ENCODE measurements at regions of chr14 and their contacts with region 1.

Region 1: DNA sequence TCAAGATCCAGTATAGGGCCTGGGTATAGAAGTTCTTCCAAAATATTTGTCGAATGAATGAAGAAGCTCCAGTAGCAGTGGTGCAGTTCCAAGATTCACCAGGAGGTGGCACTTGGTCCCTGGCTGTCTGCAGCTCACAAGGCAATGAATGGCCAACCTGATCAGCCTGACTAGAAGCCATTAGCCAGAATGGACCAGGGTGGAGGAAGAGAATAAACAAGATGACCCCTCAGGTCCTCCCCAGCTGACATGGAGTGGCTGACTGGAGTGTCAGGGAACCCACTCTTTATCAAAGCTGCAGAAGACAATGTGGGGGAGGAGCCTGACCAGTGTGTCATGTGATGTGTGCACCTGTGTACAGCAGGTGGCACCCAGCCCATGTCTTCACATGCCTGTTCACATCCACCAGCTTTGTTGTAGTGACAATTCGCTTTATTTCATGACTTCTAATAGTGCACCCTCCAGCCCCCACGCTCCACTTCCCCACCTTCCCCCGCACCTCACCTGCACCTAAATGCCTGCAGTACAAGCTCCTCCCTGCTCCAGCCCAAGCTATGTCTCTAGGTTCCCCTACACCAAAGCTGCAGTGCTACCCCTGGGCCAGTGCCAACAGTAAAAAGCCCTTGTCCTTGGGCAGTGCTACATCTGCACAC is 3.0 kb downstream of the LTBP2 start:
- DNase-seq: peak; percentile 79
- ATAC-seq: peak; percentile 70
- H3K4me3 ChIP-seq: no peak overlapping the region
- H3K27ac ChIP-seq: no peak overlapping the region
- H3K4me1 ChIP-seq: peaks cover 0 to 15% of the 10 kb centered on the region in 2 experiments; a peak in 1 of 4 replicates
- H3K27me3 ChIP-seq: no peaks in the 10 kb centered on the region
- CTCF ChIP-seq: peak in 2 of 3 experiments; percentile 98; a peak in 4 of 6 replicates
- POLR2A ChIP-seq: no peak
- RAD21 ChIP-seq: no peak

Region 2: DNA sequence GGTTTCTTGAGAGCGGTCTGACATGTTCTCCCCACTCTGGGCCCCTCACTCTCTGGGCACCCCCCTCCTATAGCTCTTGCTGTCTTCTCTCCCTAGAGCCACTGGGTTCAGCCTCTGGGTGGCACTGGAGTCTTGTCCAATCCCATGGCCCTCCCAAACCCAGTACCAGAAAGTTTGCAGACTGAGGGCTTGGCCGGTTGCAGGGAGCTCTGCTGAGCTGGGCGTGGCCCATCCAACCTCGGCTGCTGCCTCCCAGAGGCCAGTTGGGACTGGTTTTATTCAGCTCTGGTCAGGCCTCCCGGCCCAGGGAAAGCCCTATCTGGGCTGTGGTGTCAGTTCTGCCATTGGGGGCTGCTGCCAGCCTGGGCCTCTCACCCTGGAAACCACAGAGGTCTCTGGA is 77.6 kb before region 1 on chr14:
- CTCF ChIA-PET with region 1: interaction called, 10 read pairs
- POLR2A ChIA-PET with region 1: no interaction called
- RAD21 ChIA-PET with region 1: interaction called, 4 to 8 read pairs
- intact Hi-C with region 1: no loop called
- DNase-seq: peak; percentile 63
- ATAC-seq: peak; percentile 98
- H3K4me3 ChIP-seq: no peak overlapping the region
- H3K27ac ChIP-seq: no peak overlapping the region; the same call in 1 of the 2 replicates
- H3K4me1 ChIP-seq: peaks cover 10 to 20% of the 10 kb centered on the region in 2 experiments
- H3K27me3 ChIP-seq: no peaks in the 10 kb centered on the region
- CTCF ChIP-seq: peak; percentile 41 to 73 (median 44); a peak in 5 of 6 replicates
- POLR2A ChIP-seq: no peak
- RAD21 ChIP-seq: peak; percentile 82

Region 3: GRCh38 chr14:74571901-74572725 is 37.0 kb before region 1 on chr14:
- CTCF ChIA-PET with region 1: interaction called, 19 read pairs
- POLR2A ChIA-PET with region 1: no interaction called
- RAD21 ChIA-PET with region 1: no interaction called
- intact Hi-C with region 1: no loop called
- DNase-seq: peak; percentile 78
- ATAC-seq: peak; percentile 66
- H3K4me3 ChIP-seq: peak overlapping the region; percentile 20 to 50
- H3K27ac ChIP-seq: peak overlapping the region; percentile 77
- H3K4me1 ChIP-seq: peaks cover 40 to 82% of the 10 kb centered on the region in 2 experiments
- H3K27me3 ChIP-seq: no peaks in the 10 kb centered on the region
- CTCF ChIP-seq: no peak
- POLR2A ChIP-seq: no peak
- RAD21 ChIP-seq: peak; percentile 16; the same call in 1 of the 2 replicates

Region 4: GRCh38 chr14:74905375-74906142 is 296.5 kb after region 1 on chr14:
- CTCF ChIA-PET with region 1: interaction called, 18 read pairs
- POLR2A ChIA-PET with region 1: interaction called, 4 read pairs
- RAD21 ChIA-PET with region 1: interaction called, 4 to 5 read pairs
- intact Hi-C with region 1: loop called (anchors 2 kb)
- DNase-seq: peak; percentile 28
- ATAC-seq: peak; percentile 68
- H3K4me3 ChIP-seq: no peak overlapping the region
- H3K27ac ChIP-seq: no peak overlapping the region
- H3K4me1 ChIP-seq: peaks cover 3 to 8% of the 10 kb centered on the region in 2 experiments; a peak in 2 of 4 replicates
- H3K27me3 ChIP-seq: no peaks in the 10 kb centered on the region
- CTCF ChIP-seq: peak; percentile 75 to 98 (median 97); a peak in 5 of 6 replicates
- POLR2A ChIP-seq: no peak
- RAD21 ChIP-seq: peak; percentile 71